ENCODE measurements at regions of chr4 and their contacts with region 1.

Region 1: GRCh38 chr4:83527671-83528070 is 8.2 kb upstream of the GPAT3 start:
- DNase-seq: no peak
- ATAC-seq: no peak
- H3K4me3 ChIP-seq: no peak overlapping the region
- H3K4me3 Mint-ChIP-seq: no peak overlapping the region
- H3K27ac ChIP-seq: no peak overlapping the region
- H3K27ac Mint-ChIP-seq: no peak overlapping the region
- H3K4me1 ChIP-seq: no peaks in the 10 kb centered on the region
- H3K4me1 Mint-ChIP-seq: peaks cover 0 to 2% (median 0%) of the 10 kb centered on the region in 7 donors
- H3K27me3 ChIP-seq: no peaks in the 10 kb centered on the region
- H3K27me3 Mint-ChIP-seq: peaks cover 10 to 30% (median 21%) of the 10 kb centered on the region in 5 donors

Region 2: GRCh38 chr4:83510442-83510841 is 17.2 kb before region 1 on chr4:
- CTCF ChIA-PET with region 1: no interaction called
- POLR2A ChIA-PET with region 1: no interaction called
- intact Hi-C with region 1: loop called in 1 of 2 experiments (anchors 2 kb)
- DNase-seq: no peak
- ATAC-seq: no peak
- H3K4me3 ChIP-seq: no peak overlapping the region
- H3K4me3 Mint-ChIP-seq: no peak overlapping the region
- H3K27ac ChIP-seq: no peak overlapping the region
- H3K27ac Mint-ChIP-seq: peak overlapping the region in 1 of 9 donors; percentile 20
- H3K4me1 ChIP-seq: no peaks in the 10 kb centered on the region
- H3K4me1 Mint-ChIP-seq: peaks cover 0 to 7% (median 2%) of the 10 kb centered on the region in 7 donors
- H3K27me3 ChIP-seq: no peaks in the 10 kb centered on the region
- H3K27me3 Mint-ChIP-seq: no peaks in the 10 kb centered on the region